ENCODE measurements at regions of chr5 and their contacts with region 1.

Region 1: GRCh38 chr5:135551593-135552447 is 16.1 kb upstream of the NEUROG1 start:
- DNase-seq: peak; percentile 87
- H3K4me3 Mint-ChIP-seq: no peak overlapping the region
- H3K27ac Mint-ChIP-seq: no peak overlapping the region
- H3K4me1 Mint-ChIP-seq: peaks cover 5% of the 10 kb centered on the region
- H3K27me3 Mint-ChIP-seq: peaks cover 25% of the 10 kb centered on the region
- CTCF ChIP-seq: peak; percentile 97

Region 2: DNA sequence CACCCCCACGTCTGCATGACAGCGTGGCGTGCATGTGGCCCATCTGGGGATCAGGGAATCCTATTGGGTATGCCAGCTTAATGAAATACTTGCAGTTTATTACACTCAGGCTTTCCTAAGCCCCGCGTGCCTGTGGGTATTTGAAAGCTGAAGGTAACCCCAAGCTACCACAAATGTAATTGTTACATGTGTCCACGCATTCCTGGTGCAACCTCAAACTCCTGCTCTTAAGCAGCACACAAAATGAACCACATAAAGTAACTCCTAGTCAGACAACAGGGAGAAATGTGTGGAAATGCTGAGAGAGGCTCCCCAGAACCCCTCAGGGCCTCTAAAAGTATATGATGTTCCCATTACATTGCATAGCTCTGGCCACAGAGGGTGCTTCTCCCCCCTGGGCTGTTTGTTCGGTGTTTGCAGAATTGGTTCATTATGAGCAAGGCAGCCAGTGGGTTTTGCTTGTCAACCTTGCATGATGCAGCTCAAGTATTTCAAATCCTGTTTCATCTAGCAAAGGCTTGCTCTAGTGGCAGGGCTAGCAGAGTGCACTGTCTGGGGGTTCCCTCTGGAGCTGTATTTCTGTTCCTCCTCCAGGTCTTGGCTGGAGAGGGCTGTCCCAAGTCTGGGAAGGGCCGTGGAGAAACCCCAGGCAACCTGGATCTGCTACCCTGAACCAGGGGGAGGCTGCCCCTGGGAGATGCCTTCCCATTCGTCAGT is 102.9 kb before region 1 on chr5:
- CTCF ChIA-PET with region 1: interaction called, 2,166 read pairs
- POLR2A ChIA-PET with region 1: no interaction called
- intact Hi-C with region 1: no loop called
- DNase-seq: no peak
- H3K4me3 Mint-ChIP-seq: no peak overlapping the region
- H3K27ac Mint-ChIP-seq: no peak overlapping the region
- H3K4me1 Mint-ChIP-seq: peaks cover 6% of the 10 kb centered on the region
- H3K27me3 Mint-ChIP-seq: peaks cover 13% of the 10 kb centered on the region
- CTCF ChIP-seq: no peak

Region 3: DNA sequence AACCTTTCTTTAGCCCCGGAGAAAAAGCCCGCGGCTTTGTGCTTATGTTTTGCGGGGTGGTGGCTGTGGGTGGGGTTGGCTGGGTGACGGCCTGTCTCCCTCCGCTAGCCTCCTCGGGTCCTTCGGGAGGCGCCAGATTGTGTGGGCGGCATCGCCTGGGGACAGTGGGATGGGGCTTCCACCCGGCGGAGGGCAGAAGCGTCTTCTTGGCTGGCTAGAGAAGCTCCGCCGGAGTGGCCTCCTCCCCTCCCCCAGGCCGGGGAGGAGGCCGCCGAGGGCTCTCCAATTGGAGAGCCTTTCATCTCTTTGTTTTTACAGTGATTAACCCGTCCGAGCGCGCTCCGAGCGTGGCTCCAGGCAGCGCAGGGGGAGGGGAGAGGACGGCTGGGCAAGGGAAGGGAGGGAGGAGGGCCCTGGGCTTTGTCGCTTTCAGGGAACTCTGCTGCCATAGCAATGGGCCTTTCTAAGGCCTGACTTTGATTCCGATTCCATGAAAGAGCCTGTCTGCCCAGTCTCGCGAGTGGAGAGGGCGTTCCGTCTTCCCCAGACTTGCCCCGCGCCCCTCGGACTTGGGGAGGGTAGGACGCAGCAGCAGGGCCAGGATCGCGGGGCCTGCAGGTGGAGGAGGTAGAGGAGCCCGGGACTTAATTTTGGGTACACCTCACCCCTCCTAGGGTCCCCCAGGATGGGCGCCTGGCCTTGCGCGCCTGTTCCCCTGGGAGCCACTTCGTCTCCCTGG is 62.9 kb before region 1 on chr5:
- CTCF ChIA-PET with region 1: interaction called, 74 read pairs
- POLR2A ChIA-PET with region 1: interaction called, 6 read pairs
- intact Hi-C with region 1: no loop called
- DNase-seq: peak; percentile 89
- H3K4me3 Mint-ChIP-seq: peak overlapping the region; percentile 62
- H3K27ac Mint-ChIP-seq: peak overlapping the region; percentile 52
- H3K4me1 Mint-ChIP-seq: peaks cover 34% of the 10 kb centered on the region
- H3K27me3 Mint-ChIP-seq: no peaks in the 10 kb centered on the region
- CTCF ChIP-seq: no peak

Region 4: DNA sequence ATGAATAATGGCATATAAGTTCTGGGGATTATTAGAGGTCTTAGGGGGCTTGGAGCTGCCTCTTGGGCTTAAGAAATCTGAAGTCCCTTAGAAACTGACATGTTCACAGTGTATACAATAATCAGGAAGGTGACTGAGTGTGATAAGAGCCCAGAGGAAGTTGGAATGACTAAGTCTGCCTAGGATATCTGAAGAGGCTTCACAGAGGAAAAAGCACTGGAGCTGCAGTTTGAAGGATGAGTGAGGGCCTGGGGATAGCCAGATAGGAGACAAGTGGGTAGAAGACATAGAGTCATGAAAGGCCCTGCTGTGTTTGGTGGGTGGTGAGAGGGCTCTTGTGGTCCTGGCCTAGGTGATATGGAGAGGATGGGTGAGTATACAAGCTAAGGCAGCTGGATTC is 24.9 kb before region 1 on chr5:
- CTCF ChIA-PET with region 1: interaction called, 104 read pairs
- POLR2A ChIA-PET with region 1: no interaction called
- intact Hi-C with region 1: no loop called
- DNase-seq: no peak
- H3K4me3 Mint-ChIP-seq: no peak overlapping the region
- H3K27ac Mint-ChIP-seq: no peak overlapping the region
- H3K4me1 Mint-ChIP-seq: no peaks in the 10 kb centered on the region
- H3K27me3 Mint-ChIP-seq: no peaks in the 10 kb centered on the region
- CTCF ChIP-seq: no peak

Region 5: DNA sequence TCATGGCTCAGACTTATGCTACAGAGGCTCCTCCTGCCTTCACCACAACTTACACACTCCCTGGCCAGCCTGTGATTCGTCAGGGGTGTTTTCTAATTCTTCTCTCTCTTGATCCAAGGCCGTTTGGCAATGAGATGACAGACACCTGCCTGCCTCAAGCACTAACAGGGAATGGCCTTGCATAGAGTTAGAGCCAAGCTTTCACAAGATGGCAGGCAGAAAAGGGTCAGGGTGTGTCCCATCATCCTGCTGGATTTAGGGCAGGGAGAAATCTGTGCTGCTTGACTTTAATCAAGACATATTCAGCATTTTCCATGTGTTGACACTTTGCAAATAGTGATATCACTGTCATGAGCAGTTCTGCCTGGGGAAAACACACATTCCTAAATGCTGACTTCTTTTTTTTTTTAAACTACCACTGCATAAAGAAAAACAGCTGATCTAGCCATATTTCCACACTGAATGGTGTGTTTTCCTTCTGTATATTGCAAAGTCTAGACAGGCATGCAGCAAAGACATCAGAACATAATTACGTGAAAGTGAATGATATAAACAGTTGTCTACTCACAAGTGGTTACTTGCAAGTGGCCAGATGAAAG is 187.7 kb after region 1 on chr5:
- CTCF ChIA-PET with region 1: interaction called, 476 read pairs
- POLR2A ChIA-PET with region 1: no interaction called
- intact Hi-C with region 1: no loop called
- DNase-seq: no peak
- H3K4me3 Mint-ChIP-seq: no peak overlapping the region
- H3K27ac Mint-ChIP-seq: peak overlapping the region; percentile 20
- H3K4me1 Mint-ChIP-seq: peaks cover 5% of the 10 kb centered on the region
- H3K27me3 Mint-ChIP-seq: peaks cover 22% of the 10 kb centered on the region
- CTCF ChIP-seq: no peak